Activated CD8-positive, alpha-beta memory T cell treated with anti-CD3 and anti-CD28 coated beads, Interleukin-2, amount 10 ng/mL, durations not matched to agents 7 days and 5 days (primary cell): ENCODE measurements at regions of chr7 and their contacts with region 1.

Region 1: GRCh38 chr7:100221231-100221718 is 1.5 kb downstream of the PVRIG start:
- DNase-seq: peak; percentile 92
- ATAC-seq: peak; percentile 48
- H3K4me3 Mint-ChIP-seq: peak overlapping the region; percentile 98
- H3K27ac Mint-ChIP-seq: peak overlapping the region; percentile 100
- H3K4me1 Mint-ChIP-seq: peaks cover 58% of the 10 kb centered on the region
- H3K27me3 Mint-ChIP-seq: no peaks in the 10 kb centered on the region

Region 2: GRCh38 chr7:100148559-100149350 is 72.5 kb before region 1 on chr7 and contains the start of gene LAMTOR4:
- CTCF ChIA-PET with region 1: interaction called, 19 read pairs
- DNase-seq: peak; percentile 100
- ATAC-seq: peak; percentile 99
- H3K4me3 Mint-ChIP-seq: peak within 1 kb of the TSS; percentile 94
- H3K27ac Mint-ChIP-seq: peak within 1 kb of the TSS; percentile 98
- H3K4me1 Mint-ChIP-seq: peaks cover 37% of the 10 kb centered on the region
- H3K27me3 Mint-ChIP-seq: no peaks in the 10 kb centered on the region
- total RNA-seq, gene LAMTOR4: 119 to 151 TPM

Region 3: GRCh38 chr7:100177045-100178001 is 44.0 kb before region 1 on chr7 and contains the starts of genes GPC2 and STAG3:
- CTCF ChIA-PET with region 1: interaction called, 11 read pairs
- DNase-seq: peak; percentile 98
- ATAC-seq: peak; percentile 93
- H3K4me3 Mint-ChIP-seq: peak within 1 kb of the TSS; percentile 67
- H3K27ac Mint-ChIP-seq: peak within 1 kb of the TSS; percentile 37
- H3K4me1 Mint-ChIP-seq: peaks cover 33% of the 10 kb centered on the region
- H3K27me3 Mint-ChIP-seq: peaks cover 26% of the 10 kb centered on the region
- total RNA-seq, gene GPC2: 2.9 to 6.2 TPM
- total RNA-seq, gene STAG3: 8.1 to 20.2 TPM

Region 4: DNA sequence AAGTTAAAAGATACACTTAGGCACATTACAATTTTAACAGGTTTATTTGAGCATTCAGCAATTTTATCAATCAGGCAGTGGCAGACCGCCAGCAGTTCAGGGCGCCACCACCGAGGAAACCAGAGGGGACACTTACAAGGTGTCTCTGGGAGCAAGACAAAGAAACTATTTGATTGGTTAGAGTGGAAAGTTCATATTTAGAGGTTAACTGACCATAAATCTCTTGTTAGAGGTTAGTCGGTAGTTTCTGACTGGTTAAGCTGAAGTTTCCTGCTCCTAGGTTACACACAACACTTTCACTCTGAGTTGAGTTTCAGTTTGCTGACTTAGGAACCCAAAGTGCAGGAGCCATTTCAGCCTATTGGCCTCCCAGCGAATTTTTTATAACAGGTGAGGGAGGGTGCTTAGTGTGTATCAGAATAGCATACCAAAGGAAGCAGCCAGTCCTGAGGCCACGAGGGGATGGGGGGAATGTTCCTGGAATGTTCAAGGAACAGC is 12.3 kb before region 1 on chr7:
- CTCF ChIA-PET with region 1: interaction called, 32 read pairs
- DNase-seq: peak; percentile 88
- ATAC-seq: peak; percentile 89
- H3K4me3 Mint-ChIP-seq: peak overlapping the region; percentile 40
- H3K27ac Mint-ChIP-seq: peak overlapping the region; percentile 77
- H3K4me1 Mint-ChIP-seq: peaks cover 48% of the 10 kb centered on the region
- H3K27me3 Mint-ChIP-seq: no peaks in the 10 kb centered on the region